T-cell (primary cell): ENCODE measurements at regions of chr7 and their contacts with region 1.

Region 1: DNA sequence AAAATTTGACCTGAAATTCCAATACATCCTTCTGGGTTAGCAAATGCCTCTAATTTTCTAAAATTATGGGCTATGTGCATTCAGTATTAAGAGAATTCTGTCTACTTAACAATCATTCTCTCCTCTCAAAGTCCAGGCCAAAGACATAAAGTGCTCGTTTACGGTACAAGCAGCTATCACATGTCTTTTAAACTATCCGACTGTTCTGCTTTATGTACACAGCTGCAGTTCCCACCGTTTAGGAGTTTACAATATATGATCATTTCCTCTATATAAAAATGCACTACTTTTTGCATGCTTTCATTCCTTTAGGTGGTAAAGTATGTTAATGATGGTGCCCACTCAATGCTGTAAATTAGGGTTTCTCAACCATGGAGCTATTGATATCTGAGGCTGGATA is 34.0 kb downstream of the CDK6 start:
- DNase-seq: no peak
- ATAC-seq: no peak
- H3K4me3 ChIP-seq: no peak overlapping the region
- H3K4me3 Mint-ChIP-seq: no peak overlapping the region
- H3K27ac ChIP-seq: no peak overlapping the region
- H3K27ac Mint-ChIP-seq: no peak overlapping the region
- H3K4me1 ChIP-seq: peaks cover 0 to 3% of the 10 kb centered on the region in 2 experiments
- H3K4me1 Mint-ChIP-seq: peaks cover 6 to 30% (median 21%) of the 10 kb centered on the region in 3 donors
- H3K27me3 ChIP-seq: no peaks in the 10 kb centered on the region
- H3K27me3 Mint-ChIP-seq: no peaks in the 10 kb centered on the region

Region 2: GRCh38 chr7:92790992-92791391 is 11.4 kb before region 1 on chr7:
- CTCF ChIA-PET with region 1: no interaction called
- POLR2A ChIA-PET with region 1: interaction called in 1 of 2 experiments, 11 read pairs
- DNase-seq: no peak
- ATAC-seq: no peak
- H3K4me3 ChIP-seq: no peak overlapping the region
- H3K4me3 Mint-ChIP-seq: no peak overlapping the region
- H3K27ac ChIP-seq: no peak overlapping the region
- H3K27ac Mint-ChIP-seq: no peak overlapping the region
- H3K4me1 ChIP-seq: no peaks in the 10 kb centered on the region
- H3K4me1 Mint-ChIP-seq: peaks cover 22 to 51% (median 46%) of the 10 kb centered on the region in 3 donors
- H3K27me3 ChIP-seq: no peaks in the 10 kb centered on the region
- H3K27me3 Mint-ChIP-seq: no peaks in the 10 kb centered on the region